ENCODE measurements at regions of chr6 and their contacts with region 1.

Region 1: GRCh38 chr6:31652925-31653718 is 661 bp upstream of the BAG6 start:
- DNase-seq: peak in 2 of 9 donors; percentile 81 to 89
- ATAC-seq: peak; percentile 77
- H3K4me3 ChIP-seq: peak overlapping the region; percentile 66
- H3K4me3 Mint-ChIP-seq: peak overlapping the region; percentile 96 to 100 (median 99)
- H3K27ac ChIP-seq: peak overlapping the region; percentile 95
- H3K27ac Mint-ChIP-seq: peak overlapping the region; percentile 99 to 100 (median 100)
- H3K4me1 ChIP-seq: peaks cover 23 to 30% of the 10 kb centered on the region in 2 donors
- H3K4me1 Mint-ChIP-seq: peaks cover 39 to 71% (median 63%) of the 10 kb centered on the region in 7 donors
- H3K27me3 ChIP-seq: no peaks in the 10 kb centered on the region
- H3K27me3 Mint-ChIP-seq: no peaks in the 10 kb centered on the region

Region 2: GRCh38 chr6:30066577-30067459 is 1586.3 kb before region 1 on chr6 and contains the start of gene PPP1R11:
- CTCF ChIA-PET with region 1: no interaction called
- POLR2A ChIA-PET with region 1: no interaction called
- intact Hi-C with region 1: loop called in 1 of 2 experiments (anchors 2 kb)
- DNase-seq: peak; percentile 84 to 100 (median 99)
- ATAC-seq: peak; percentile 99
- H3K4me3 ChIP-seq: peak within 1 kb of the TSS; percentile 94
- H3K4me3 Mint-ChIP-seq: peak within 1 kb of the TSS; percentile 87 to 100 (median 98)
- H3K27ac ChIP-seq: peak within 1 kb of the TSS; percentile 96
- H3K27ac Mint-ChIP-seq: peak within 1 kb of the TSS; percentile 96 to 100 (median 99)
- H3K4me1 ChIP-seq: peaks cover 28 to 41% of the 10 kb centered on the region in 2 donors
- H3K4me1 Mint-ChIP-seq: peaks cover 43 to 77% (median 71%) of the 10 kb centered on the region in 7 donors
- H3K27me3 ChIP-seq: no peaks in the 10 kb centered on the region
- H3K27me3 Mint-ChIP-seq: peaks cover 10 to 22% (median 16%) of the 10 kb centered on the region in 5 donors
- total RNA-seq, gene PPP1R11: 49.4 to 67.1 (median 62.7) TPM

Region 3: GRCh38 chr6:30990422-30991086 is 662.6 kb before region 1 on chr6:
- CTCF ChIA-PET with region 1: no interaction called
- POLR2A ChIA-PET with region 1: no interaction called
- intact Hi-C with region 1: no loop called
- DNase-seq: peak in 8 of 9 donors; percentile 4 to 51 (median 25)
- ATAC-seq: peak; percentile 67
- H3K4me3 ChIP-seq: peak overlapping the region; percentile 26
- H3K4me3 Mint-ChIP-seq: peak overlapping the region; percentile 62 to 90 (median 80)
- H3K27ac ChIP-seq: no peak overlapping the region
- H3K27ac Mint-ChIP-seq: peak overlapping the region; percentile 33 to 90 (median 75)
- H3K4me1 ChIP-seq: peaks cover 0 to 12% of the 10 kb centered on the region in 2 donors
- H3K4me1 Mint-ChIP-seq: peaks cover 10 to 15% (median 14%) of the 10 kb centered on the region in 7 donors
- H3K27me3 ChIP-seq: no peaks in the 10 kb centered on the region
- H3K27me3 Mint-ChIP-seq: peaks cover 0 to 3% (median 0%) of the 10 kb centered on the region in 5 donors

Region 4: DNA sequence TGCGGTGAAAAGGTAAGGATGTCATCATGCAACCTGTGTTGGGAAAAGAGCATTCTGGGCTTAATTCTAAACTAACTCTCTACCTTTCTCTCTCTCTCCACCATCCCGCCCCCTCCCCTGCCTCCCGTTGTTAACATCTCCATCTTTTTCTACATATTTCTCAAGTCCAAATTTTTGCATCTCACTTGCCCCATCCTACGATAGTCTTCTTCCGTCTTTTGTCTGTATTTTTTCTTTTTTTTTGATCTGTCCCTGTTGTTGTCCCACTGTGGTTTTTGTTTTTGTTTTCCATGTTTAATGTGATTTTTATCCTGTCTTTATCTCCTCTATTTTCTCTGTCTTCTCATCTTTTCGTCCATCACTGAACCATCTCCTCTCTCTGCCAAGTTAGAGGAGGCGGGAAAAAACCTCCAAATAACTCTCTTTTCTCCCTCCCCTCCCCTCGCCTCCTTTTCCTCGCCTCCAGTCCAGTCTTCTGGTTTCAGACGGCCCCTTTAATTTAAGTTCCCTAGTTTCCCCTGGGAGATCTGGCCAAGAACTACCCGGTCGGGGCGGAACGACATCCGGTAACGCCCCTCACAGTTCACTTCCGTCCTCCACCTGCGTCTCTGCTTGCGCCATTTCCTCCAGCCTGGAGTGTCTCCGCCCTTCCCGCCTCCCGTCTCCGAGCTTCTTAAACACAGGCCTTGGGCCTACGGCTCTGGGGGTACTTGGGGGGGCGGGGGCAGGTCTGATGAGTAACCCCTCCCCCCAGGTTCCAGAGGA is 106.0 kb before region 1 on chr6 and contains the start of gene NFKBIL1:
- CTCF ChIA-PET with region 1: interaction called, 9 read pairs
- POLR2A ChIA-PET with region 1: interaction called, 21 read pairs
- intact Hi-C with region 1: loop called (anchors 1 kb)
- DNase-seq: peak; percentile 53 to 90 (median 84)
- ATAC-seq: peak; percentile 91
- H3K4me3 ChIP-seq: peak within 1 kb of the TSS; percentile 68
- H3K4me3 Mint-ChIP-seq: peak within 1 kb of the TSS; percentile 81 to 97 (median 91)
- H3K27ac ChIP-seq: peak within 1 kb of the TSS; percentile 89
- H3K27ac Mint-ChIP-seq: peak within 1 kb of the TSS; percentile 78 to 98 (median 95)
- H3K4me1 ChIP-seq: peaks cover 22 to 31% of the 10 kb centered on the region in 2 donors
- H3K4me1 Mint-ChIP-seq: peaks cover 22 to 57% (median 48%) of the 10 kb centered on the region in 7 donors
- H3K27me3 ChIP-seq: no peaks in the 10 kb centered on the region
- H3K27me3 Mint-ChIP-seq: no peaks in the 10 kb centered on the region
- total RNA-seq, gene NFKBIL1: 8.7 to 17.2 (median 11.6) TPM

Region 5: GRCh38 chr6:31614684-31615578 is 38.2 kb before region 1 on chr6 and contains the start of gene AIF1:
- CTCF ChIA-PET with region 1: interaction called, 3 read pairs
- POLR2A ChIA-PET with region 1: interaction called, 43 read pairs
- intact Hi-C with region 1: loop called (anchors 1 kb)
- DNase-seq: no peak
- ATAC-seq: no peak
- H3K4me3 ChIP-seq: peak within 1 kb of the TSS; percentile 59
- H3K4me3 Mint-ChIP-seq: peak within 1 kb of the TSS; percentile 77 to 91 (median 86)
- H3K27ac ChIP-seq: peak within 1 kb of the TSS; percentile 70
- H3K27ac Mint-ChIP-seq: peak within 1 kb of the TSS; percentile 79 to 94 (median 90)
- H3K4me1 ChIP-seq: peaks cover 3 to 26% of the 10 kb centered on the region in 2 donors
- H3K4me1 Mint-ChIP-seq: peaks cover 23 to 49% (median 42%) of the 10 kb centered on the region in 7 donors
- H3K27me3 ChIP-seq: no peaks in the 10 kb centered on the region
- H3K27me3 Mint-ChIP-seq: peaks cover 0 to 3% (median 0%) of the 10 kb centered on the region in 5 donors
- total RNA-seq, gene AIF1: 33.1 to 160 (median 62.0) TPM

Region 6: DNA sequence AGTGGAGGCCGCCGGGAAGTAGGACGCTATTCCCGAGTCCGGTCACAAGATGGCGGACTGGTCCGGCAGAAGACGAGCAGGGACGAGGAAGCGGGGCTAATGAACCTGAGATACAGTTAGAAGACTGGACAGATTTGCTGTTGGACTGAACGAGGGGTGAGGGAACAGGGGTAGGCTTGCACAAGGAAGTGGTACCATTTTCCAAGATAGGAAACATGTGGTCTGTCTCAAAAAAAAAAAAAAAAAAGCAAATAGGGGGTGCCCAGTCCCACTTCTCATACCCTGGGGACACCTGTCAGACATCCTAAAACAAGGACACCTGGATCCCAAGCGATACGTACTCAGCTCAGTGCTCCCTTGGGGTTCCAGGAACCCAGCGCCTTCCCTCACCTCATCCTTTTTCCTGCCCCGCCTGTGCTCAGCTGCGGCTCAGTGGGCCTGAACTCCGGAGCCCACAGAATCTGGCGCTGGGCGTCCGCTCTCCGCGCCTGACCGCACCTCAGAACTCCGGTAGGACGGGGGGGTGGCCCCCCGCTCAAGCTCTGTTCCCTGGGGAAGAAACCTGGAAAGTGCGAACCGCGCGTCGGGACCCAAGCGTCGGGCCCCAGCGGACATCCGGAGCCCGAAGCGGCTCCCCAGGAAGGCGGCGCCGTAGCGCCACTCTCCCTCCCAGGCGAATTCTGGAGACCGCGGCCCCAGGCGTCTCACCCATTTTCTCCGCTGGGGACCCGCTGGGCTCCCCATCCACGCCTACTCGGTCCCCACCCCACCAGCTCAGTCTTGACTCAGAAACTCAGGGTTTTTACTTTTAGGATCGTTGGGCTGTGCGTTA is 27.9 kb after region 1 on chr6 and contains the start of gene LY6G5C:
- CTCF ChIA-PET with region 1: no interaction called
- POLR2A ChIA-PET with region 1: interaction called, 18 read pairs
- intact Hi-C with region 1: loop called in 1 of 2 experiments (anchors 2 kb)
- DNase-seq: peak in 8 of 9 donors; percentile 28 to 65 (median 48)
- ATAC-seq: peak; percentile 80
- H3K4me3 ChIP-seq: peak within 1 kb of the TSS; percentile 78
- H3K4me3 Mint-ChIP-seq: peak within 1 kb of the TSS; percentile 86 to 98 (median 90)
- H3K27ac ChIP-seq: peak within 1 kb of the TSS; percentile 68
- H3K27ac Mint-ChIP-seq: peak within 1 kb of the TSS; percentile 60 to 86 (median 68)
- H3K4me1 ChIP-seq: peaks cover 15 to 16% of the 10 kb centered on the region in 2 donors
- H3K4me1 Mint-ChIP-seq: peaks cover 14 to 32% (median 19%) of the 10 kb centered on the region in 7 donors
- H3K27me3 ChIP-seq: no peaks in the 10 kb centered on the region
- H3K27me3 Mint-ChIP-seq: no peaks in the 10 kb centered on the region
- total RNA-seq, gene LY6G5C: 2.4 to 4.3 (median 3.1) TPM

Region 7: DNA sequence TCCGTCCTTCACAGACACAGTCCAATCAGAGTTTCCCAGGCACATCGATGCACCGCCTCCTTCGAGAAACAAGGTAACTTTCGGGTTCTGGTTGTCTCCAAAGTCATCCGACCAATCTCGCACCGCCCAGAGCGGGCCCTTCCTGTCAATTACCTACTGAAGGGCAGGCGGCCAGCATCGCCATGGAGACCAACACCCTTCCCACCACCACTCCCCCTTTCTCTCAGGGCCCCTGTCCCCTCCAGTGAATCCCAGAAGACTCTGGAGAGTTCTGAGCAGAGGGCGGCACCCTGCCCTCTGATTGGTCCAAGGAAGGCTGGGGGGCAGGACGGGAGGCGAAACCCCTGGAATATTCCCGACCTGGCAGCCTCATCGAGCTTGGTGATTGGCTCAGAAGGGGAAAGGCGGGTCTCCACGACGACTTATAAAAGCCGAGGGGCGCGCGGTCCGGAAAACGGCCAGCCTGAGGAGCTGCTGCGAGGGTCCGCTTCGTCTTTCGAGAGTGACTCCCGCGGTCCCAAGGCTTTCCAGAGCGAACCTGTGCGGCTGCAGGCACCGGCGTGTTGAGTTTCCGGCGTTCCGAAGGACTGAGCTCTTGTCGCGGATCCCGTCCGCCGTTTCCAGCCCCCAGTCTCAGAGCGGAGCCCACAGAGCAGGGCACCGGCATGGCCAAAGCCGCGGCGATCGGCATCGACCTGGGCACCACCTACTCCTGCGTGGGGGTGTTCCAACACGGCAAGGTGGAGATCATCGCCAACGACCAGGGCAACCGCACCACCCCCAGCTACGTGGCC is 174.4 kb after region 1 on chr6 and contains the start of gene HSPA1B:
- CTCF ChIA-PET with region 1: no interaction called
- POLR2A ChIA-PET with region 1: interaction called, 12 read pairs
- intact Hi-C with region 1: loop called in 1 of 2 experiments (anchors 1 kb)
- DNase-seq: peak; percentile 55 to 96 (median 82)
- ATAC-seq: peak; percentile 80
- H3K4me3 ChIP-seq: peak within 1 kb of the TSS; percentile 74
- H3K4me3 Mint-ChIP-seq: peak within 1 kb of the TSS; percentile 85 to 97 (median 90)
- H3K27ac ChIP-seq: peak within 1 kb of the TSS; percentile 72
- H3K27ac Mint-ChIP-seq: peak within 1 kb of the TSS; percentile 93 to 99 (median 97)
- H3K4me1 ChIP-seq: peaks cover 12 to 17% of the 10 kb centered on the region in 2 donors
- H3K4me1 Mint-ChIP-seq: peaks cover 11 to 51% (median 46%) of the 10 kb centered on the region in 7 donors
- H3K27me3 ChIP-seq: no peaks in the 10 kb centered on the region
- H3K27me3 Mint-ChIP-seq: no peaks in the 10 kb centered on the region
- total RNA-seq, gene HSPA1B: 8.6 to 68.9 (median 28.9) TPM

Region 8: DNA sequence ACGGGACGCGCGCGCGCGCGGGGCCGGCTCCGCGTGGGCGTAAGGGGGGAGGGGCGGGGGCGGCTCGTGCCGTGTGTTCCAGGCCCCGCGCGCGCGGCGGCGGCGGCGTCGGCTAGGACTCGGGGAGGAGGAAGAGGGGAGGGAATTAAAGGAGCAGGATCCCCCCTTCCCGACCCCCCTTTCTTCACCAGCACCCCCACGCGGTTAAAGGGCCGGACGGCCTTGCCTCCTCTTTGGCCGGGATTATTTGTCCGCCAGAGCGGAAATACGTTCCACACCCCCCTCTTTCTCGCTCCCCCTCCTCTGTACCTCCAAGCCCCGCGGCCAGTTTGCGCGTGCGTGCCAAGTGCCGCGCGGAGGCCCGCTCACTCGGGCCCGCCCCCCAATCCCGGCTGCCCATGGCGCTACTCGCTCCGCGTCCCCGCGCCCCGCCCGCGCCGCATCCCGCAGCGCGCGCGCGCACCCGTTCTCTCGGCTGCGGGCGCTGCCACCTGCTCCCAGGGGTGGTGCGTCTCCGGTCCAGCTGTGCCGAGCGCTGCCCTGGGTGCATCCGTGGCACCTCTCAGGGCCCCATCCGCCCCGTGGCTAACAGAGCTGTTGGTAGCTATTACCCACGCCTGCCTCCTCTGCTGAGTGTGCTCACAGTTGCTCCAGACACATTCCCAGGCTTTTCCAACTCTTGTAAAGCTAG is 249.0 kb after region 1 on chr6 and contains the start of gene ZBTB12:
- CTCF ChIA-PET with region 1: no interaction called
- POLR2A ChIA-PET with region 1: interaction called, 12 read pairs
- intact Hi-C with region 1: loop called in 1 of 2 experiments (anchors 1 kb)
- DNase-seq: peak; percentile 76 to 90 (median 84)
- ATAC-seq: peak; percentile 76
- H3K4me3 ChIP-seq: peak within 1 kb of the TSS; percentile 80
- H3K4me3 Mint-ChIP-seq: peak within 1 kb of the TSS; percentile 81 to 96 (median 88)
- H3K27ac ChIP-seq: peak within 1 kb of the TSS; percentile 83
- H3K27ac Mint-ChIP-seq: peak within 1 kb of the TSS; percentile 75 to 94 (median 86)
- H3K4me1 ChIP-seq: peaks cover 12 to 16% of the 10 kb centered on the region in 2 donors
- H3K4me1 Mint-ChIP-seq: peaks cover 18 to 34% (median 32%) of the 10 kb centered on the region in 7 donors
- H3K27me3 ChIP-seq: no peaks in the 10 kb centered on the region
- H3K27me3 Mint-ChIP-seq: peaks cover 0 to 11% (median 0%) of the 10 kb centered on the region in 5 donors
- total RNA-seq, gene ZBTB12: 0.77 to 4.5 (median 2.5) TPM

Measured in naive thymus-derived CD4-positive, alpha-beta T cell (primary cell).